Ovary (tissue), 10 donors: ENCODE measurements at regions of chr9 and their contacts with region 1.

Region 1: DNA sequence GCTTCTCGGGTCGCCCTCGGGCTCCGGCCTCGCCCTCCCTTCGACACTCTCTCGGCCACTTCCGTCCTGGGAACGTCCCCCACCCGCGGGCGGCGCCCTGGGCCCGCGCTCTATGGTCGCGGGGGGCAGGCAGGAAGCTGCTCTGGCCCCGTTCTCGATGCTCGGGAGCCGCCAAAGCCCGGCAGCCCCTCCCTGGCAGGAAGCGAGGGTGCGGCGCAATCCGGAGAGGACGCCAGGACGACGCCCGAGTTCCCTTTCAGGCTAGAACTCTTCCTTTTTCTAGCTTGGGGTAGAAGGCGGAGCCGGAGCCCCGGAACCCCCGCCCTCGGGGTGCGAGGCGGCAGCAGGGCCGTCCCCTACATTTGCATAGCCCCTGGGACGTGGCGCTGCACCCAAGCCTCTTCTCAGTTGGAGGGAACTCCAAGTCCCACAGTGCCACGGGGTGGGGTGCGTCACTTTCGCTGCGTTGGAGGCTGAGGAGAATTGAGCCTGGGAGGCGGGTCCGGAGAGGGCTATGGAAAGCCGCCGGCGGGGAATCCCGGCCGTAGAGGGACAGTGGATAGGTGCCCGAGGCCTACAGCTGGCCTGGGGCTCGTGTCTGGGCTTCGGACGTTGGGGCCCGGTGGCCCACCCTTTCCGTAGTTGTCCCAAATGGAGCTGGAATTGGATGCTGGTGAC is at the starts of genes CREB3 and TLN1:
- DNase-seq: peak; percentile 95 to 98 (median 97)
- H3K4me3 ChIP-seq: peak within 1 kb of the TSS; percentile 92
- H3K27ac ChIP-seq: peak within 1 kb of the TSS; percentile 92 to 96
- H3K4me1 ChIP-seq: peaks cover 30% of the 10 kb centered on the region
- H3K27me3 ChIP-seq: no peaks in the 10 kb centered on the region
- CTCF ChIP-seq: no peak
- EP300 ChIP-seq: peak; percentile 73
- POLR2A ChIP-seq: peak; percentile 60
- total RNA-seq, gene CREB3: 31.2 to 41.5 (median 36.6) TPM
- total RNA-seq, gene TLN1: 106 to 344 (median 271) TPM

Region 2: DNA sequence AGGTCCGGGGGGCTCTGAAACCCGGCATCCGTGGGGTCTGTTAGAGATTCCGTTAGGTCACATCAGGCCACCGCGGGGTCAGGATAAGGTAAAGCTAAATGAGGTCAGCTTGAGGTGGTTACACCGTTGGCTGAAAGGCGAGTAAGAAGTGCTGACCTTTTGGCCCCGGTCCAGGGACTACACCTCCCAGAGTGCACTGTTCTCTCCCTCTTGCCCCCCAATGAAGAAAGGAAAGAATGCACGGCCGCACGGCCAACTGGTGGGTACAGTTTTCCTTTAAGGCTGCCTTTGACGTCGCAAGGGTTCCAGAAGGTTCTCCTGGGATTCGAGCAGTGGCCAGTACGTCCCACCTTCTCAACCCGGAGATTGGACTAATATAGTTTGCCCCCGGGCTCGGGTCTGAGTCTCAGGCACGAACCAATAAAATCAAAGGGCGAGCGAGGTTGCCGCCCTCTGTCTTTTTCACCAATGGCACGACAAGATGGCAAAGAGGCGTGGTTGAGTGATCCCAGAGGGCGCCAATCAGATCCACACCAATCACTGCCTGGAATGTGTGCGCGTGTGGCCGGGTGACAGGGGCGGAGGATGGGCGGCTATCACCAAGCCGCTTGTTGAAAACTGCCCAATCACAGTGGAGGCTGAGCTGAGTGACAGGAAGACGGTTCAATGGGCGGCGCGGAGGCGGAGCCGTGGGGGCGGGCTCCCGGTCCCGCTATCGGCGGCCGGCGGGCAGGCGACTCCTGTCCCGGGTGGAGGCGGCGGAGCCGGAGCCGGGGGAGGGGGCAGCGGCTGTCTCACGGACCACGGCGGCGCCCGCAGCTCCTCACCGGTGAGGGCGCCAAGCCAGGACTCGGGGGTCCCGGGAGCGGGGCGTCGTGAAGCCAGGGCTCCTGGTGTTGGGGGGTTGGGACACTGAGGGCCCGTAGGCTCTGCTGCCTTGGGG is 743.0 kb before region 1 on chr9 and contains the start of gene DNAJB5:
- intact Hi-C with region 1: loop called in 1 of 4 experiments (anchors 5 kb)
- DNase-seq: peak; percentile 97 to 99 (median 98)
- H3K4me3 ChIP-seq: peak within 1 kb of the TSS; percentile 79
- H3K27ac ChIP-seq: peak within 1 kb of the TSS; percentile 50 to 69
- H3K4me1 ChIP-seq: peaks cover 16% of the 10 kb centered on the region
- H3K27me3 ChIP-seq: no peaks in the 10 kb centered on the region
- CTCF ChIP-seq: no peak
- EP300 ChIP-seq: peak; percentile 8
- POLR2A ChIP-seq: peak; percentile 79
- total RNA-seq, gene DNAJB5: 6.4 to 21.0 (median 11.8) TPM

Region 3: DNA sequence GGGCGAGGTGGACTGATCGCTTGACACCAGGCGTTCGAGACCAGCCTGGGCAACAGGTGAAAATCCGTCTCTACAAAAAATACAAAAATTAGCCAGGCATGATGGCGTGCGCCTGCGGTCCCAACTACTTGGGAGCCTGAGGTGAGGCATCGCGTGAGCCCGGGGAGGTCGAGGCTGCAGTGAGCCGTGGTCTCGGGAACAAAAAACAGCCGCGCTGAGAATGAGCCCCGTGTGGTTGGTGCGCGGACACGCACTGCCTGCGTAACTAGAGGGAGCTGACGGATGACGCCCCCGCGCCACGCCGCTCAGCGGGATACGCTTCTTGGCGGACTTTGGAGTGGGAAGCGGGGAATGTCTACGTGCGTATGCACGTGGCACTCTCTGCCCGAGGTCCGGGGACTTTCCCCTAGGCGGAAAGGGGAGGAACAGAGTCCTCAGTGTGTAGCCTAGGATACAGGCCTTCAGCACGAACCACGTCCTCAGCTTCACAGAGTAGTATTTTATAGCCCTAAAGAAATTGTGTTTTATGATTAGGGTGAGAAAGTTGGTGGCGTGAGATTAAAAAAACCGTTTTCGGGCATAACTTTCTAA is 74.6 kb before region 1 on chr9 and contains the start of gene RMRP:
- intact Hi-C with region 1: loop called in 3 of 4 experiments (anchors 5 kb)
- DNase-seq: peak; percentile 96 to 97 (median 97)
- H3K4me3 ChIP-seq: peak within 1 kb of the TSS; percentile 94
- H3K27ac ChIP-seq: peak within 1 kb of the TSS; percentile 81 to 97
- H3K4me1 ChIP-seq: no peaks in the 10 kb centered on the region
- H3K27me3 ChIP-seq: no peaks in the 10 kb centered on the region
- CTCF ChIP-seq: peak; percentile 38 to 77 (median 66)
- EP300 ChIP-seq: peak; percentile 62
- POLR2A ChIP-seq: peak; percentile 72
- total RNA-seq, gene RMRP: 3,031 to 27,726 (median 15,130) TPM

Region 4: DNA sequence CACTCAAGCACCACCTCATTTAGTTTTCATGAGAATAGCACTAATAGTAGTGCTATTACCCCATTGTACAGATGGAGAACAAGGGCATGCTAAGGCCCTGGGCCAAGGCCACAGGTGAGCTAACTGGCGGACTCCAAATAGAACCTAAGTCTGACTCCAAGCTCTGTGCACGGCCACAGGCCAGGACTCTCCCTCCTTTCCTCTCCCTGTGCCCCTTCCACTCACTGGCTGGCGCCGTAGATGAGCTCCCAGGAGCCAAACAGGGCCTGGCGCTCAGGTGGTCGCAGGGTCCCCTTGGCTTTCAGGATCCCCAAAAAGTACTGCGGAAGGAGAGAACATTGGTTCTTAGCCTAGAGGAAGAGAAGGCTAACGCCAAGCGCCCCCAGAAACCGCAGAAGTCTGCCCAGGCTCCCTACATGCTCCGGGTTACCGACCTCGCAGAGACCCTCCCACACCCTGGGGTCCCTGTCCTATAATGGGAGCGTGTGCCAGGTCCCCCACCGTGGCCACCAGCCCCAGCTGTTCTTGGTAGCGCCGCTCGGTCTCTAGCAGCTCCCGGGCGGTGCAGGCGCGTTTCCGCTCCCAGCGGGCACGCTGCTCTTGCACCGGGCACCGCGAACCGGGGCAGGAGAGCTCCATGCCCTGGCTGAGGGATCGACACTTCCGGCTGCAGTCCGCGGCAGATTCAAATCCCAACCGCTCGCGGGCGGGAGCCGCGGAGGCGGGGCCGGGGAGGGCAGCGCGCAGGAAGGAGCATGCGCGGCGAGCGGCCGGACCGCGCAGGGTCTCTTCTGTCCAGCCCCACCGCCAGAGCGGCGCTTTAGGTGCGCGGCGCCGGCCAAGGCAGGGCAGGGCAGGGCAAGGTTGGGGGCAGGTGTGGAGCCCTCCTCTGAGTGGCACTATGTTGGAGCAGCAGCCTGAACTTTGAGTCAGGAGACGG is 67.5 kb before region 1 on chr9 and contains the start of gene ARHGEF39:
- intact Hi-C with region 1: loop called in 2 of 4 experiments (anchors 5 kb)
- DNase-seq: peak; percentile 69 to 85 (median 76)
- H3K4me3 ChIP-seq: peak within 1 kb of the TSS; percentile 45
- H3K27ac ChIP-seq: peak within 1 kb of the TSS; percentile 1 to 24
- H3K4me1 ChIP-seq: no peaks in the 10 kb centered on the region
- H3K27me3 ChIP-seq: no peaks in the 10 kb centered on the region
- CTCF ChIP-seq: no peak
- EP300 ChIP-seq: no peak
- POLR2A ChIP-seq: no peak
- total RNA-seq, gene ARHGEF39: 0.17 to 1.4 (median 0.58) TPM

Region 5: GRCh38 chr9:35690431-35691333 is 41.6 kb before region 1 on chr9:
- intact Hi-C with region 1: loop called in 3 of 4 experiments (anchors 5 kb)
- DNase-seq: peak; percentile 82 to 91 (median 85)
- H3K4me3 ChIP-seq: peak overlapping the region; percentile 66
- H3K27ac ChIP-seq: peak overlapping the region; percentile 46 to 93
- H3K4me1 ChIP-seq: peaks cover 13% of the 10 kb centered on the region
- H3K27me3 ChIP-seq: no peaks in the 10 kb centered on the region
- CTCF ChIP-seq: no peak
- EP300 ChIP-seq: no peak
- POLR2A ChIP-seq: peak; percentile 49

Region 6: DNA sequence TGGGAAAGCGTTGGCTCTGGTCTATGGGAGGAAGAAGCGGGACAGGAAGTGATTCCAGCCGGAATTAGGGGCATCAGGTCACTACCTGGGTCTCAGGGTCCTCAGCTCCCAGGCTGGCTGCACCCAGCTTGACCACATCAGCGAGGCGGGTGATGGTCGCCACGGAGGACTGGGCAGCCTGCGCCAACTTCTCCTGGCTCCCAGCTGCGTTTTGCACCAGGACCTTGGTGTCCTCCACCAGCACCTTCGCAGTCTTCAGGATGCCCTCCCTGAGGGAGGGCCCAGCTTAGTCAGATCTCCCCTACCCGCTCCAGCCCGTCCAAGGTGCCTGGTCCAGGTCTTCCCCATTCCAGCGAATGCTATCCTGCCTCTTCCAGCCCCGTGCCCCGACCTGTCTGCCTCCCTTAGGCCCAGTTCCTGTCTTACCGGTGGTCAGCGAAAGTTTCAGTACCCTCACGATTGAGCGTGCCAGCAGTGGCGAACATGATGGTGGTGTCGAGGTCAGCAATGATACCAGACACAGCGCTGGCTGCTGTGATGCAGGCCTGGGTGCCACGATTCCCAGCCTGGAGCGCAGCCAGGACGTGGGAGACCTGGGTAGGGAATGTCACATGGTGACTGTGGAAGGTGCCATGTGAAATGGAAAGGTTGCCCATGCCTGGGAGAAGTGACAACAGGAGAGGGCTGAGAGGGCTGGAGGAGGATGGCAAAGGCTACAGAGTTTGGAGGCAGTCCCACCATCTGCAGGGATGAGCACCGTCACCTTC is 28.2 kb before region 1 on chr9:
- intact Hi-C with region 1: no loop called
- DNase-seq: peak in 1 of 5 donors; percentile 33
- H3K4me3 ChIP-seq: no peak overlapping the region
- H3K27ac ChIP-seq: no peak overlapping the region
- H3K4me1 ChIP-seq: no peaks in the 10 kb centered on the region
- H3K27me3 ChIP-seq: no peaks in the 10 kb centered on the region
- CTCF ChIP-seq: no peak
- EP300 ChIP-seq: no peak
- POLR2A ChIP-seq: no peak

Region 7: DNA sequence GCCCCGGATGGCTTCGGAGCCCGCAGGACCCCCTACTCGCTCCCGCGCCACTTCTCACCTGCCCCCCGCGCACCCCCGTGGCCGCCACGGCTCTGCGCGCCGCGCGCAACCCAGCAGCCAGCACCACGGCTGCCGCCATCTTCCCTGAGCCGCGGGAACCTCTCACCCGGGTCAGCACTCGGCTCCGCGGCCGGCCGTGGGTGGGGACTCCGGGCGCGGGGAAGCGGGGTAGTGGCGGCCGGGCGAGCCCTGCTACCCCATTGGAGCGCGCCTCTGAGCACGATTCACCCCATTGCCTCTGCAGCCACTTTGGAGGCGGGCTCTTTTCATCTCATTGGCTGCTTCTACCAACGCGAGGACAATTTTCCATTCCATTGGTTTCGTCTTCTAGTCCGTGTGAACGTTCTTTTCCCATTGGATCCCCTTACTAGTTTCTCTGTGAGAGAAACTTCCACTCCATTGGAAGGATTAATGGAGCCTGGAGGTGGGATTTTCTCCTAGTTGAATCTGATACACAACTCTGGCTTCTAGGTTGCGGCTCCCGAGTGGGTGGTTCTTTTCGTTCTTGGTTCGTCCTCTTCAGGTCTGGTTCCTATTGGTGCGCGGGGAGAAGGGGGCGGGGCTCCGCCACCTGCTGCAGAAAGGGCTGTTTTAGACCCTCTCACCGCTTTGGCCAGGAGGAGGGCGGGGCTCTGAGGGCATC is 82.7 kb after region 1 on chr9 and contains the start of gene HINT2:
- intact Hi-C with region 1: loop called in 1 of 4 experiments (anchors 5 kb)
- DNase-seq: peak; percentile 92 to 96 (median 93)
- H3K4me3 ChIP-seq: peak within 1 kb of the TSS; percentile 74
- H3K27ac ChIP-seq: peak within 1 kb of the TSS; percentile 89 to 96
- H3K4me1 ChIP-seq: peaks cover 2% of the 10 kb centered on the region
- H3K27me3 ChIP-seq: no peaks in the 10 kb centered on the region
- CTCF ChIP-seq: peak in 2 of 3 donors; percentile 10 to 26
- EP300 ChIP-seq: no peak
- POLR2A ChIP-seq: peak; percentile 91
- total RNA-seq, gene HINT2: 14.9 to 38.0 (median 24.9) TPM